GM18951 (cell line): ENCODE measurements at regions of chr20 and their contacts with region 1.

Region 1: GRCh38 chr20:37986873-37987601 is 46.2 kb downstream of the TTI1 start:
- POLR2A ChIP-seq: no peak

Region 2: GRCh38 chr20:37384683-37385174 is 602.3 kb before region 1 on chr20:
- in situ Hi-C with region 1: no loop called
- POLR2A ChIP-seq: peak; percentile 28

Region 3: DNA sequence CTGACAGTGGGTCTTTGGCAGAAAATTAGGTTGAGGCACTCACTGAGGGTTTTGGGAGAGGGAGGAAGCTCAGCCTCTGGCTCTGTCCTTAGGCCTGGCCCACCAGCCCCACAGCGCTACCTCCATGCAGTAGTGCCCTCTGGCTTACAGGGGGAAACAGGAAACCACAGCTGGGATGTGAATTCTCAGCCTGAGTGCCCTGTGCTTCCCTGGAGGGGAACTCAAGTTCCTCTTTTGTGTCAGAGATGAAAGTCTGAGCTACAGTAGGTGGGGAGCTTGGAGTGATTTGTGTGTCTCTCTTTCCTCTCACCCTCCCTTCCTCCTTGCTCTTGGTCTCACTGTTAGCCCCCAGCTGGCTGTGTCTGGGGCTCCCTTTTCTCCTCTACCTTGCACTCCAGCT is 411.2 kb before region 1 on chr20:
- in situ Hi-C with region 1: loop called (anchors 10 kb)
- POLR2A ChIP-seq: no peak